ENCODE measurements at regions of chr13 and their contacts with region 1.

Region 1: DNA sequence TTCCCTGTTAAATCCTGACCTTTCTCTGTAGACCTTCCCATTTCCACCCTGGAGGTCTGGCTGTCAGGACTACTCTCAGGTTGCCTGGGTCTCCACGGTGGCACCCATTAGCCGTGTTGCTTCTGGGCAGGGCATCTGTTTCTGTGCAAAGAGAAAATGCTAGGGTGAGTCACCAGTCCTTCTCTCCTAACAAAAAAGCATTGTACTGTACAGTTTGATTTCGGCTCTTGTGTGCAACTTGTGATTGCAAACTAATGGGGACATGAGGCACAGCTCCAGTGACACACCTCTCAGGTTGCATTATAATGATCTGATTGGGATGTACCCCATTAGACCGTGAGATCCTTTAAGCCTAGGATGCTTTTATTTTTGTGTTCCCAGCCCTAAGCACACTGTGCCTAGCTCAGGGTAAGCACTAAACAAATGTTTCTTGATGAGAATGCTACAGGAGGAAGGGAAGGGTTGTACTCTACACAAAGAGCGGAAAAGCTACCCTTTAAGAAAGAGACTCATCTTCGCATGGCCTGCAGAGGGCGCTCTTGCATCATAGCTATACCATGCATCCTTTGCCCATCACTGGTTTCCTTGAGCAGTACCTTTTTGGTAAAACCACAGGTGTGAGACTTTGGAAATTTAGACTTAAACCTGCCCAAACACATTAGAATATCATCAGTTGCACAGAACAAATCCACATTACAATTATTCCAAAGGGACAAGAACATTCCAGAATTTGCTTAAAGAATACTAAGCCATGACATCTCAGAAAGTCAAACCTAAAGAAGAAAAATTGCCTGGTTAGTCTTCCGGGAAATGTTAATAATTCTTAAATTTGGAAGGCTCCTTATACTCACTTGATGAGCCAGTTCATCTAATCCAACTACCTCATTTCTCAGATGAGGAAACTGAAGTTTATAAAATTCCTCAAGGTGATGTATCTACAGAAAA is 20.3 kb upstream of the TRIM13 start:
- DNase-seq: peak in 1 of 2 donors; percentile 80
- H3K4me3 ChIP-seq: no peak overlapping the region
- H3K27ac ChIP-seq: no peak overlapping the region
- H3K4me1 ChIP-seq: no peaks in the 10 kb centered on the region
- H3K27me3 ChIP-seq: no peaks in the 10 kb centered on the region
- CTCF ChIP-seq: peak; percentile 66 to 84 (median 80)

Region 2: GRCh38 chr13:50170447-50171037 is 194.0 kb after region 1 on chr13:
- intact Hi-C with region 1: loop called (anchors 5 kb)
- DNase-seq: no peak
- H3K4me3 ChIP-seq: no peak overlapping the region
- H3K27ac ChIP-seq: no peak overlapping the region
- H3K4me1 ChIP-seq: no peaks in the 10 kb centered on the region
- H3K27me3 ChIP-seq: no peaks in the 10 kb centered on the region
- CTCF ChIP-seq: peak; percentile 29 to 50 (median 35)

Region 3: GRCh38 chr13:50801087-50801931 is 824.7 kb after region 1 on chr13:
- intact Hi-C with region 1: loop called (anchors 5 kb)
- DNase-seq: peak in 1 of 2 donors; percentile 64
- H3K4me3 ChIP-seq: no peak overlapping the region
- H3K27ac ChIP-seq: no peak overlapping the region
- H3K4me1 ChIP-seq: peaks cover 0 to 5% of the 10 kb centered on the region in 2 donors
- H3K27me3 ChIP-seq: no peaks in the 10 kb centered on the region
- CTCF ChIP-seq: peak; percentile 57 to 70 (median 63)

Region 4: GRCh38 chr13:51070005-51070649 is 1093.5 kb after region 1 on chr13:
- intact Hi-C with region 1: loop called (anchors 5 kb)
- DNase-seq: peak in 1 of 2 donors; percentile 85
- H3K4me3 ChIP-seq: no peak overlapping the region
- H3K27ac ChIP-seq: no peak overlapping the region
- H3K4me1 ChIP-seq: no peaks in the 10 kb centered on the region
- H3K27me3 ChIP-seq: no peaks in the 10 kb centered on the region
- CTCF ChIP-seq: peak; percentile 83 to 92 (median 91)